HepG2 (cell line): ENCODE measurements at regions of chr3 and their contacts with region 1.

Region 1: DNA sequence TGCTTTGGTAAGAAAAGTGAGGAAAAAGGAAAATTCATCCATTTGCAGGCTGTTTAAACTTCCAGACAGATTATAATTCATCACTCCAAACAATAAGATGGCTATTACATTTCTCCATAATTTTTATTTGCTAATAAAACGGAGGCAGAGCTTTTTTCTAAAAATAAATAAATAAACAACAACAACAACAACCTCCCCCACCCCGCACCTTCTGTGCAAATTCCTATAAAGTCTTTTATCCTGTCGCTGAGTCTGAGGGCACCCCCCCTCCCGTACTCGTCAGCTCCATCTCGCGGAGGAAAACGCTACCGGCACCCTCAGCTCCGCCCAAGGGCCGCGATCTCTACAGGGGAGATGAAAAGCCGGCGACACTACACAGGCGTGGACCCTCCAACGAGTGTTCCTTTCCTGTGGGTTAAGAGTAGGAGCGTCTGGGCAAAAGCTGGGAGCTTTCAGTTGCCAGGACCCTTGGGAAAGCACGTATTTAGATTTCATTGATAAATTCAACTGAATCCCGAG is 1.0 kb upstream of the ATP1B3 start:
- DNase-seq: peak; percentile 67
- ATAC-seq: peak; percentile 85
- H3K4me3 ChIP-seq: peak overlapping the region; percentile 92
- H3K27ac ChIP-seq: peak overlapping the region; percentile 47
- H3K4me1 ChIP-seq: peaks cover 25% of the 10 kb centered on the region
- H3K27me3 ChIP-seq: no peaks in the 10 kb centered on the region
- CTCF ChIP-seq: peak; percentile 88
- EP300 ChIP-seq: no peak
- POLR2A ChIP-seq: no peak
- RAD21 ChIP-seq: peak; percentile 60

Region 2: GRCh38 chr3:141303481-141304223 is 571.8 kb before region 1 on chr3:
- CTCF ChIA-PET with region 1: no interaction called
- POLR2A ChIA-PET with region 1: no interaction called
- in situ Hi-C with region 1: no loop called
- intact Hi-C with region 1: loop called (anchors 10 kb)
- DNase-seq: peak; percentile 64
- ATAC-seq: peak; percentile 80
- H3K4me3 ChIP-seq: no peak overlapping the region
- H3K27ac ChIP-seq: no peak overlapping the region
- H3K4me1 ChIP-seq: peaks cover 6% of the 10 kb centered on the region
- H3K27me3 ChIP-seq: no peaks in the 10 kb centered on the region
- CTCF ChIP-seq: peak; percentile 74
- EP300 ChIP-seq: no peak
- POLR2A ChIP-seq: no peak
- RAD21 ChIP-seq: 0 out of 2 replicates have a peak, but pooled peaks have one; percentile 28

Region 3: GRCh38 chr3:141487521-141488252 is 387.7 kb before region 1 on chr3:
- CTCF ChIA-PET with region 1: no interaction called
- POLR2A ChIA-PET with region 1: no interaction called
- in situ Hi-C with region 1: no loop called
- intact Hi-C with region 1: loop called (anchors 10 kb)
- DNase-seq: peak; percentile 70
- ATAC-seq: peak; percentile 86
- H3K4me3 ChIP-seq: peak overlapping the region; percentile 86 to 90 (median 88)
- H3K27ac ChIP-seq: peak overlapping the region; percentile 82
- H3K4me1 ChIP-seq: peaks cover 62% of the 10 kb centered on the region
- H3K27me3 ChIP-seq: no peaks in the 10 kb centered on the region
- CTCF ChIP-seq: no peak
- EP300 ChIP-seq: 0 out of 4 replicates have a peak, but pooled peaks of 1 of the 2 experiments have one; percentile 2
- POLR2A ChIP-seq: peak; percentile 57 to 75; a peak in 3 of 4 replicates
- RAD21 ChIP-seq: no peak

Region 4: DNA sequence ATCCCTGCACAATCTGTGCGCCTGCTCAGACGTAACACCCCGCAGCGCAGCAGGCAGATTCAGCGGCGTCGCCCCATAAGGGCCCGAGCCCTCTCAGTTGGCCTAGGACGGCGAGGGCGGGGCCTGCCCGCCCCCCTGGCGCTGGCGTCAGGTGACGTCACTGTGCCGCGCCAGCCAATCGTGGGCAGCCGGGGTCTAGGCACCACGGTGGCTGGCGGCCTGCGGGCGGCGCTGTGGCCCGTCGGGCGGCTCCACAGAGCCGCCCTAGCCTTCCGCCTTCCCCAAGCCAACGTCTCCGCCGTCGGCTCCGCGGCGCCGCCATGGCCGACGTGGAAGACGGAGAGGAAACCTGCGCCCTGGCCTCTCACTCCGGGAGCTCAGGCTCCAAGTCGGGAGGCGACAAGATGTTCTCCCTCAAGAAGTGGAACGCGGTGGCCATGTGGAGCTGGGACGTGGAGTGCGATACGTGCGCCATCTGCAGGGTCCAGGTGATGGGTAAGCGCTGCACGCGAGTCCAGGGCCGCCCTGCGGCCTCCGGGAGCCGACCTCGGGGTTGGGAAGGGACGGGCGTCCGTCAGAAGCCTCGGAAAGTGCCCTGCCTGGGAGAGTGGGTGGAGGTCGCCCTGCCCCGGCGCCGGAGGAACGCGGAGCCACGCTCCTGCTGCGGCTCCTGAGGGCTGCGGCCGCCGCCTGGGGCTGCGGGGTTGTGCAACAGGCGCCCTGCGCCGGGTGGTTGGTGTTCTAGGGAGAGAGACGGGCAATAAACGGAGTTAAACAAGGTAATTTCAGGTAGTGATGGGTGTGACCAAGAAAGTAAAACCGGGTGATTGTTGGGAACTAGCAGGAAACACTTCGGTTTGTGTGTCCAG is 137.2 kb before region 1 on chr3 and contains the start of gene RNF7:
- CTCF ChIA-PET with region 1: interaction called, 19 read pairs
- POLR2A ChIA-PET with region 1: interaction called, 8 read pairs
- in situ Hi-C with region 1: loop called (anchors 10 kb)
- intact Hi-C with region 1: loop called (anchors 1 kb)
- DNase-seq: peak; percentile 87
- ATAC-seq: peak; percentile 96
- H3K4me3 ChIP-seq: peak within 1 kb of the TSS; percentile 90 to 99 (median 99)
- H3K27ac ChIP-seq: peak within 1 kb of the TSS; percentile 81
- H3K4me1 ChIP-seq: peaks cover 69% of the 10 kb centered on the region
- H3K27me3 ChIP-seq: no peaks in the 10 kb centered on the region; a peak in 1 of 5 replicates
- CTCF ChIP-seq: peak; percentile 88
- EP300 ChIP-seq: 0 out of 4 replicates have a peak, but pooled peaks of 1 of the 2 experiments have one; percentile 7
- POLR2A ChIP-seq: peak; percentile 86 to 88
- RAD21 ChIP-seq: peak; percentile 98
- total RNA-seq, gene RNF7: 94.7 and 102 TPM in 2 replicates

Region 5: GRCh38 chr3:141905129-141905528 is 29.7 kb after region 1 on chr3:
- CTCF ChIA-PET with region 1: no interaction called
- POLR2A ChIA-PET with region 1: no interaction called
- in situ Hi-C with region 1: no loop called
- intact Hi-C with region 1: loop called (anchors 1 kb)
- DNase-seq: no peak
- ATAC-seq: no peak
- H3K4me3 ChIP-seq: no peak overlapping the region
- H3K27ac ChIP-seq: no peak overlapping the region
- H3K4me1 ChIP-seq: no peaks in the 10 kb centered on the region
- H3K27me3 ChIP-seq: no peaks in the 10 kb centered on the region
- CTCF ChIP-seq: no peak
- EP300 ChIP-seq: no peak
- POLR2A ChIP-seq: no peak
- RAD21 ChIP-seq: no peak

Region 6: DNA sequence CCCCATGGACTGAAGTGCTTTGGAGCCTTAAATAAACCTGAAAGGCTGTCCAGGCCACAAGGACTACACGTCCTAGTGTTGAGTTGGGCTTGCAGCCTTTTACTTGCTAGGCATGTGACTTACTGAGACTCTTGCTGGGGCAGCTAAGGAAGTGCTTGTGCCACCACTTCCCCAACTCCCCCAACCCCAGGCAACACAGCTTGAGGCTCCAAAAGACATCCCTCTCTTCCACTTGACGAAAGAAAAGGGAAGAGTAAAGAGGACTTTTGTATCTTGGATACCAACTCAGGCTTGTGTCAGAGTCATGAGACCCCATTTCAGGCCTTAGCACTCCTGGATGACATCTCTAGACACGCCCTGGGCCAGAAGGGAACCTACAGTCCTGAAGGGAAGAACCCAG is 462.6 kb after region 1 on chr3:
- CTCF ChIA-PET with region 1: no interaction called
- POLR2A ChIA-PET with region 1: no interaction called
- in situ Hi-C with region 1: no loop called
- intact Hi-C with region 1: no loop called
- DNase-seq: no peak
- ATAC-seq: no peak
- H3K4me3 ChIP-seq: no peak overlapping the region
- H3K27ac ChIP-seq: no peak overlapping the region
- H3K4me1 ChIP-seq: no peaks in the 10 kb centered on the region
- H3K27me3 ChIP-seq: no peaks in the 10 kb centered on the region
- CTCF ChIP-seq: no peak
- EP300 ChIP-seq: no peak
- POLR2A ChIP-seq: no peak
- RAD21 ChIP-seq: no peak